MCF 10A (cell line): ENCODE measurements at regions of chr7 and their contacts with region 1.

Region 1: DNA sequence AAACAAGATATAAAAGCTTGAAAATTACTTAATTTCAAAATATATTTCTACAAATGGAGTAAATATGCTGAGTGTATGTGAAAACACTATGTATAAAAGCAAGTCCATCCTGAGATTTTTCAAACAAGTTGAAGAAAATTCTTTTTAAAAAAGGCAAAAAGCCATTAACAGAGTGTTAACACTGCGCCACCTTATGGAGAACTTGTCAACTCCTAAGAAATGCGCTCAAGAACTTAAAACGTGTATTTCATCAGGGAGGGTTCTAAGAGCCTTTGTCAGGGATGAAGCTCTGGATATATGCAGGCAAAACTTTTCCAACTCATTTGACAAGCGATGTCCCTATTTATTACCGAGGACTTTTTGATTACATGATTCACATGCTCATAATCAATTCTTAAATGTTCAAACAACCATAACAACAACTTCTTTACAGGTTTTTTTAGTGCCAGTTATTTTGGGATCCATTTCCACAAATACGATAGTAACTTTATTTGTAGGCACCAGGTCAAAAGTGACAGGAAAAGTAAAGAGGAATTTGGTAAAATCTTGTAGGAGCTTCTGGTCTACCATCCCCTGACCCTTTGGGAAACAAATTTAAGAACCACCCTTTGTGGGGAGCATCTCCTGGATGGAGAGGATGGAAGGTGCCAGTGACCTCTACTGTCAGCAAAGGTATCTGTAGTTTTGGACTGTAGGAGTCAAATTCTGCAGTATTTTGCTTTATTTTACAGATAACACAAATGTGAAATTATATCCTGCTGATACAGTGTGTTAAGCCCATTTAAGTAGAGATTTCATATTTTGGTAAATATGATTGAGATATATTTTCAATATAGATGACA is 23.2 kb downstream of the CALCR start:
- DNase-seq: peak; percentile 51
- H3K4me3 Mint-ChIP-seq: no peak overlapping the region
- H3K27ac Mint-ChIP-seq: no peak overlapping the region
- H3K4me1 Mint-ChIP-seq: no peaks in the 10 kb centered on the region
- H3K27me3 Mint-ChIP-seq: peaks cover 75% of the 10 kb centered on the region
- CTCF ChIP-seq: peak; percentile 48

Region 2: DNA sequence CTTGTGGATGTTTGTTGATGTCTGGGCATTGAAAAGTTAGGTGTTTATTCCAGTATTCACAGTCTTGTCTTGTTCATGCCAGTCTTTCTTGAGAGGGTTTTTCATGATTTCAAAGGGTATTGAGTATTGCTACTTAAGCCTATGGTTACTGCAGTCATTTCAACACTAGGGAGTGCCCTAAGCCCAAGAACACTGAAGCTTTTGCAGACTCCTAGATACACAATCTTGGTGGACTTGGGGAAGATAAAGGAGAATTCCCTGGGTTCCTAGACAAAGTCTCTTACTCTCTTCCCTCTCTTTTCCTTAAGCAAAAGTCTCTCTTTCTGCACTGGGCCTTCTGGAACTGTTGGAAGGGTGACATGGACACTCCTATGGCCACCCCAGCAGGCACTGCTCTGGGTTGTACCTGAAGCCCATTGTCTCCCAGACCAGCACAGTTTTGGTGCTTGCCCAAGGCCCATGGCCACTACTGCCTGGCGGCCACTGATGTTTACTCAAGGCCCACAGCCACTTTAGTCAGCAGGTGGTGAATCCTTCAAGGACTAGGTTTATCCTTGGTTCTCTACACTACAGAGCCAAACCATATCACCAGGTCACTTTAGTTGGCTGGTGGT is 458.4 kb before region 1 on chr7:
- CTCF ChIA-PET with region 1: interaction called, 3 read pairs
- POLR2A ChIA-PET with region 1: no interaction called
- intact Hi-C with region 1: loop called (anchors 2 kb)
- DNase-seq: peak; percentile 56
- H3K4me3 Mint-ChIP-seq: no peak overlapping the region
- H3K27ac Mint-ChIP-seq: no peak overlapping the region
- H3K4me1 Mint-ChIP-seq: no peaks in the 10 kb centered on the region
- H3K27me3 Mint-ChIP-seq: peaks cover 95% of the 10 kb centered on the region
- CTCF ChIP-seq: peak; percentile 72

Region 3: GRCh38 chr7:93178212-93178611 is 373.1 kb before region 1 on chr7:
- CTCF ChIA-PET with region 1: no interaction called
- POLR2A ChIA-PET with region 1: no interaction called
- intact Hi-C with region 1: loop called (anchors 2 kb)
- DNase-seq: no peak
- H3K4me3 Mint-ChIP-seq: no peak overlapping the region
- H3K27ac Mint-ChIP-seq: no peak overlapping the region
- H3K4me1 Mint-ChIP-seq: no peaks in the 10 kb centered on the region
- H3K27me3 Mint-ChIP-seq: peaks cover 64% of the 10 kb centered on the region
- CTCF ChIP-seq: peak; percentile 40

Region 4: GRCh38 chr7:93238748-93239147 is 312.5 kb before region 1 on chr7:
- CTCF ChIA-PET with region 1: interaction called, 15 read pairs
- POLR2A ChIA-PET with region 1: no interaction called
- intact Hi-C with region 1: no loop called
- DNase-seq: no peak
- H3K4me3 Mint-ChIP-seq: no peak overlapping the region
- H3K27ac Mint-ChIP-seq: no peak overlapping the region
- H3K4me1 Mint-ChIP-seq: no peaks in the 10 kb centered on the region
- H3K27me3 Mint-ChIP-seq: no peaks in the 10 kb centered on the region
- CTCF ChIP-seq: no peak

Region 5: GRCh38 chr7:93245525-93246432 is 305.5 kb before region 1 on chr7:
- CTCF ChIA-PET with region 1: interaction called, 32 read pairs
- POLR2A ChIA-PET with region 1: no interaction called
- intact Hi-C with region 1: loop called (anchors 1 kb)
- DNase-seq: peak; percentile 34
- H3K4me3 Mint-ChIP-seq: no peak overlapping the region
- H3K27ac Mint-ChIP-seq: no peak overlapping the region
- H3K4me1 Mint-ChIP-seq: no peaks in the 10 kb centered on the region
- H3K27me3 Mint-ChIP-seq: no peaks in the 10 kb centered on the region
- CTCF ChIP-seq: peak; percentile 40

Region 6: DNA sequence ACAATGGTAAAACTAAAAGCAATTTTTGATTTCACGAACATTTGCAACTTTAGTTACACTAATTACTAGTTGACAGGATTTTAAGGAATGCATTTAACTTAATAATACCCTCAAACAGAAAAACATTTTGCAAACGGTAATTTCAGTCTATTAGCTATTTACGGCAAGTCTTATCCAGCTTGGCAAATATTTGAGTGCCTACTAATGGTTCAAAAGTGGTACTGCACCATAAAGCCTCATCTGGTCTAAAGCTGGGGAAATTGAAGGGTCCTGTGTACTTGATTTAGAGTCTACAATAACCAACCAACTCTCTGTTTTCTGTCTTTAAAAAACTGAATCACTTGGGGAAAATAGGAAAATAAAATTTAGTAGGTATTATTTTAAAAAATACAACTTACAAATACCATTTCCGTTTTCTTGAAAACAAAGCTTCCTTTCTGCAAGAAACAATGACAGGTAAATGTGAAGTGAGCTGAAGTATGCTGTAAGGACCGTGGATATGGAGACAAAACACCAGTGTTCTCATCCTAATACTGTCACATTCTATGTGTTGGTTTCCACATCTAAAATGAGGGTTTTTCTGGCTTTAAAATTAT is 176.8 kb before region 1 on chr7:
- CTCF ChIA-PET with region 1: no interaction called
- POLR2A ChIA-PET with region 1: no interaction called
- intact Hi-C with region 1: loop called (anchors 10 kb)
- DNase-seq: peak; percentile 47
- H3K4me3 Mint-ChIP-seq: no peak overlapping the region
- H3K27ac Mint-ChIP-seq: no peak overlapping the region
- H3K4me1 Mint-ChIP-seq: no peaks in the 10 kb centered on the region
- H3K27me3 Mint-ChIP-seq: peaks cover 58% of the 10 kb centered on the region
- CTCF ChIP-seq: peak; percentile 52

Region 7: GRCh38 chr7:93442478-93443224 is 108.6 kb before region 1 on chr7:
- CTCF ChIA-PET with region 1: interaction called, 16 read pairs
- POLR2A ChIA-PET with region 1: no interaction called
- intact Hi-C with region 1: loop called (anchors 2 kb)
- DNase-seq: peak; percentile 58
- H3K4me3 Mint-ChIP-seq: no peak overlapping the region
- H3K27ac Mint-ChIP-seq: no peak overlapping the region
- H3K4me1 Mint-ChIP-seq: no peaks in the 10 kb centered on the region
- H3K27me3 Mint-ChIP-seq: peaks cover 91% of the 10 kb centered on the region
- CTCF ChIP-seq: peak; percentile 66